Activated B cell treated with CpG ODN at 0.5 μM for 24 hours (primary cell): ENCODE measurements at regions of chr1 and their contacts with region 1.

Region 1: DNA sequence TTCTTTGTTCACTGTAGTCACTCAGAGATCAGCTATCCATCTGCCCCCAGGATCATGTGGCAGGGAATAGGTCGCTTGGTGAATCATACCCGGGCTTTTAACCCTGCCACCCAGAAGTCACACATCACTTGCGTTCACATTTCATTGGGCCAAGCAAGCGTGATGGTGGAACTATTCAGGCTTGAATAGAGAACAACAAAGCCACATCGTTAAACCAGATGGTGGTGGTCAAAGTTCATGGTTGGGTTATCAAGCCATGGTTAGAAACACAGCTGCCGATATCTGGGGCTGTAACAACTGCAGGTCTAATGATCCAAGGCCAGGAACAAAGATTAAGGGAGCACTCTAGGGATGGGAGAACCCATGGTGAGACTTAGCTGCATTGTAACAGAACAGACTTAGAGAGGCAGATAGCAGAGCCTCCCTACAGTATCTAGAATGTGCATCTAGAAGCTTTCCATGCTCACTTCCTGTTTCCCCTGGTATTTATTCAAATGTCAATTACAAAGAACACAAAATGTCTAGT is 40.0 kb upstream of the PTPRC start:
- DNase-seq: peak; percentile 40
- ATAC-seq: peak; percentile 76
- H3K4me3 Mint-ChIP-seq: peak overlapping the region; percentile 90
- H3K27ac Mint-ChIP-seq: peak overlapping the region; percentile 99
- H3K4me1 Mint-ChIP-seq: peaks cover 90% of the 10 kb centered on the region
- H3K27me3 Mint-ChIP-seq: no peaks in the 10 kb centered on the region
- CTCF ChIP-seq: no peak

Region 2: GRCh38 chr1:198175423-198176170 is 423.3 kb before region 1 on chr1:
- CTCF ChIA-PET with region 1: no interaction called
- POLR2A ChIA-PET with region 1: no interaction called
- intact Hi-C with region 1: loop called (anchors 5 kb)
- DNase-seq: no peak
- ATAC-seq: peak; percentile 74
- H3K4me3 Mint-ChIP-seq: peak overlapping the region; percentile 53
- H3K27ac Mint-ChIP-seq: peak overlapping the region; percentile 74
- H3K4me1 Mint-ChIP-seq: peaks cover 83% of the 10 kb centered on the region
- H3K27me3 Mint-ChIP-seq: no peaks in the 10 kb centered on the region
- CTCF ChIP-seq: no peak

Region 3: DNA sequence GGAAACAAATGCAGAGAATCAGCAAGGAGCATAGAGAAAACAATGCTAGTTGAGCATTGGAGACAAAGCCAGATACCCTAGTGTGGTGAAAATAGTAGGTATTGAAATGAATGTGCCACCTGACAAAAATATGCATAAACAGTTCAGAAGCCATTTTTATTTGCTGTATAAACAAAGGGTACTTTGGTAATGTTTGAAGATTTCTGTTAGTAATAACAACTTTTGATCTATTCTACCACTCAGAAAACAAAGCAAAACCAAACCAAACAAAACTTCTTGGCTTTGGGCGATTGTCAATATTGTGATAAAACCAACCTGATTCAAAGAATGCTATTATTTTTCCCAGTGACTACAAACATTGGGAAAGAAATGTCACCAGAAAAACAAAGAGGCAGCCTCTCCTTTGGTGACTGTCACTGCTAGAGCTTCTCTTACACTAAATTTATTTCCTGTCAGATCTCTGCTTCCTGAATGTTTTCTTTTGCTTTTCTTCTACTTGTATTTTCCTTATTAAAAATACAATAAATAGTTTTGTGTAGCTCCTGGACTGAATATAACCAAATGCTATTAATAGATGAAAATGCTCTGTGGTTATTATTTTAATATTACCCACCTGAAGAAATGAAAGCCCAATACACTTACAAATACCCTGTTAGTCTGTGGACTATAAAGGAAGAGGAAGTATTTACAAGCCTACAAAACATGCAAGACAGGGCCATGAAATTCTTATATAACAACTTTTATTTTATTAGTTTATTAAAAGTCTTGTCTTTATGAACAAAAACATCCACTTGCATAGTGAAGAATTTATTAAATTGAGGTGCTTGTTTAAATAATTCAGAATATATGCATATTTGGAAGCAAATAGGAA is 64.1 kb before region 1 on chr1:
- CTCF ChIA-PET with region 1: no interaction called
- POLR2A ChIA-PET with region 1: interaction called, 11 read pairs
- intact Hi-C with region 1: no loop called
- DNase-seq: no peak
- ATAC-seq: peak; percentile 56
- H3K4me3 Mint-ChIP-seq: peak overlapping the region; percentile 55
- H3K27ac Mint-ChIP-seq: peak overlapping the region; percentile 80
- H3K4me1 Mint-ChIP-seq: peaks cover 84% of the 10 kb centered on the region
- H3K27me3 Mint-ChIP-seq: no peaks in the 10 kb centered on the region
- CTCF ChIP-seq: no peak

Region 4: DNA sequence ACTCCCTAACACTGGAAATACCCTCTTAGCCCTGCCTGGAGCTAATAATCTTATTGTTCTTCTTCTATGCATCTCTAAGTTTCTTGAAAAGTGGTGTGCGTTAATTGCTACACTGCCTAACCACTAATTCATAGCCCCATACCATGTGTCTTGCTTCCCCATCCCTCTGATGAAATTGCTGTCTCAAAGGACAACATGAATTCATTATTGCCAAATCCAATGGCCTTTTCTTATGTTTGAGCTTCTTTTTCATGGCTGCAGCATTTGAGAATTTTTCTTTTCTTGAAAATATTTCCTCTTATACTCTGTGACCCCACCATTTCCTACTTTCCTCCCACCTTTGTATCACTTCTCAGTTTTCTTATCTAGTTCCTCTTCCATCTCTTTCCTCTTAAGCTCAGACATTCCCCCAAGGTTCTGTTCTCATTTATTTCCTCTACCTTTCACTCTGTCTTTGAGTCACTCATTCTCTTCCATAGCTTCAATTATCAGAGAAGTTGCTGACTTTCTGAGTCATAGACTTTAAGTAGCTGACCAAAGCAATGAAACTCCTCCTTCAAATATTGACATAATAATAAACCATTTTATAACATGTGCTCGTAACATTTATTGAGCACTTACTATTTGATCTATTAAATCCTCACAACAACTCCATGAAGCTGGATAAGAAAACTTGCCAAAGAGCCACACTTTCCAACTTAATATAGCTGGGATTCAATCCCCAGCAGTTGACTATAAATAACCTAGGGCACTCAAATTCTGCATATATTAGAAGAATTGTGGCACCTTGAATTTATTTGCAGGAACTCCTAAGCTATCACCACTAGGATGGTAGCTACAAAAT is 22.8 kb before region 1 on chr1:
- CTCF ChIA-PET with region 1: interaction called, 3 read pairs
- POLR2A ChIA-PET with region 1: interaction called, 19 read pairs
- intact Hi-C with region 1: loop called (anchors 1 kb)
- DNase-seq: no peak
- ATAC-seq: peak; percentile 89
- H3K4me3 Mint-ChIP-seq: peak overlapping the region; percentile 21
- H3K27ac Mint-ChIP-seq: peak overlapping the region; percentile 82
- H3K4me1 Mint-ChIP-seq: peaks cover 30% of the 10 kb centered on the region
- H3K27me3 Mint-ChIP-seq: no peaks in the 10 kb centered on the region
- CTCF ChIP-seq: no peak

Region 5: GRCh38 chr1:198638894-198639635 is 40.2 kb after region 1 on chr1 and contains the start of gene PTPRC:
- CTCF ChIA-PET with region 1: interaction called, 4 read pairs
- POLR2A ChIA-PET with region 1: interaction called, 40 read pairs
- intact Hi-C with region 1: loop called (anchors 1 kb)
- DNase-seq: no peak
- ATAC-seq: peak; percentile 78
- H3K4me3 Mint-ChIP-seq: peak within 1 kb of the TSS; percentile 87
- H3K27ac Mint-ChIP-seq: peak within 1 kb of the TSS; percentile 95
- H3K4me1 Mint-ChIP-seq: peaks cover 68% of the 10 kb centered on the region
- H3K27me3 Mint-ChIP-seq: no peaks in the 10 kb centered on the region
- CTCF ChIP-seq: no peak
- total RNA-seq, gene PTPRC: 426 and 506 TPM in 2 replicates